Tibial artery (tissue), 4 donors: ENCODE measurements at regions of chr22 and their contacts with region 1.

Region 1: DNA sequence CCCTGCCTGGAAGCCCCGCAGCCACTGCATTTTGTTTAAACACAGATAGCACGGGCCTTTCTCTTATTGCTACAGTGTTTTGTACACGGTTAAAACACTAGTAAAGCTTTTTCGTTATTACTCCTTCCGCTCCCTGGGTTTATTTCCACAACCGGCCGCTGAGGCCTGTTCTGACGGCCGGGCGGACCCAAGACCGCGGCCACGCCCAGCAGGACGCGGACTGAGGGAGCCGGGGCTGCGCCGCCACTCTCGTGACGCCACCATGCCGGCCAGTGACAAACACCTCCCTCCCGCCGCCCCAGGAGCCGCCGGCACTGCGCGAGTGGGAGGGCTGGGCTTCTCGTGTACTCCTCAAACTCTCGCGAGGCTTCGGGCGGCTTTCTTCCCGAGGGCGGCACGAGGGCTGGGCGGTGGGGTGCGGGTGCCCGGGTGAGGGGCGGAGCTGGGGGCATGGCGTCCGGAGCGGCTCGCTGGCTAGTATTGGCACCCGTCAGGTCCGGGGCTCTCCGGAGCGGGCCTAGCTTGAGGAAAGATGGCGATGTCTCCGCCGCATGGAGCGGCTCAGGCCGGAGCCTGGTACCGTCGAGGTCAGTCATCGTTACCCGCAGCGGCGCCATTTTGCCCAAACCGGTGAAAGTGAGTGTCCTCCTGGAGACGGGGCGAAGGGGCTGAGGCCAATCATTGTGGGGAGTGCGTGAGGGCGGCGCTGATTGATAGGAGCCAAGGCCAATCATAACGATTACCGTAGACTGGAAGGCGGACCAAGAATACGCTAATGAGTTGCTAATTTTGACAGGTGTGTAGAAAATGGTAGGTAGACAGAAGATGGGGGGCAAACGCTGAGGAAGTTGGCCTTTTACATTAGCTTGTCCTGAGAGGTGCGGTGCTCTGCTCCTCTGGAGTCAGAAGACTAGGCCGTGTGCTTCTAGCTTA is at the start of gene SMDT1:
- DNase-seq: peak; percentile 99 to 100
- H3K4me3 ChIP-seq: peak within 1 kb of the TSS; percentile 65 to 67
- H3K27ac ChIP-seq: peak within 1 kb of the TSS; percentile 97 to 100
- H3K4me1 ChIP-seq: peaks cover 0 to 57% (median 38%) of the 10 kb centered on the region in 4 donors
- H3K27me3 ChIP-seq: no peaks in the 10 kb centered on the region
- CTCF ChIP-seq: peak in 1 of 2 experiments; percentile 3

Region 2: GRCh38 chr22:41832553-41833368 is 246.8 kb before region 1 on chr22 and contains the start of gene SREBF2:
- intact Hi-C with region 1: loop called (anchors 10 kb)
- DNase-seq: peak; percentile 100
- H3K4me3 ChIP-seq: peak within 1 kb of the TSS; percentile 61 to 91
- H3K27ac ChIP-seq: peak within 1 kb of the TSS; percentile 78 to 87
- H3K4me1 ChIP-seq: peaks cover 0 to 18% (median 8%) of the 10 kb centered on the region in 4 donors
- H3K27me3 ChIP-seq: no peaks in the 10 kb centered on the region
- CTCF ChIP-seq: peak in 1 of 2 experiments; percentile 11

Region 3: GRCh38 chr22:42270512-42271417 is 191.2 kb after region 1 on chr22 and contains the start of gene TCF20:
- intact Hi-C with region 1: loop called (anchors 5 kb)
- DNase-seq: peak; percentile 71 to 84
- H3K4me3 ChIP-seq: peak within 1 kb of the TSS; percentile 92 to 97
- H3K27ac ChIP-seq: peak within 1 kb of the TSS; percentile 77 to 86
- H3K4me1 ChIP-seq: peaks cover 0 to 20% (median 13%) of the 10 kb centered on the region in 4 donors
- H3K27me3 ChIP-seq: no peaks in the 10 kb centered on the region
- CTCF ChIP-seq: no peak

Region 4: GRCh38 chr22:42343551-42344081 is 264.0 kb after region 1 on chr22:
- intact Hi-C with region 1: loop called (anchors 10 kb)
- DNase-seq: no peak
- H3K4me3 ChIP-seq: peak overlapping the region; percentile 50 to 56
- H3K27ac ChIP-seq: peak overlapping the region; percentile 60 to 72
- H3K4me1 ChIP-seq: peaks cover 0 to 19% (median 11%) of the 10 kb centered on the region in 4 donors
- H3K27me3 ChIP-seq: peaks cover 0 to 15% of the 10 kb centered on the region in 2 donors
- CTCF ChIP-seq: no peak